Head of caudate nucleus (tissue), 42 donors: ENCODE measurements at regions of chr15 and their contacts with region 1.

Region 1: GRCh38 chr15:72155635-72156616 is 37.7 kb downstream of the SENP8 start:
- DNase-seq: peak; percentile 76 to 96 (median 92)

Region 2: DNA sequence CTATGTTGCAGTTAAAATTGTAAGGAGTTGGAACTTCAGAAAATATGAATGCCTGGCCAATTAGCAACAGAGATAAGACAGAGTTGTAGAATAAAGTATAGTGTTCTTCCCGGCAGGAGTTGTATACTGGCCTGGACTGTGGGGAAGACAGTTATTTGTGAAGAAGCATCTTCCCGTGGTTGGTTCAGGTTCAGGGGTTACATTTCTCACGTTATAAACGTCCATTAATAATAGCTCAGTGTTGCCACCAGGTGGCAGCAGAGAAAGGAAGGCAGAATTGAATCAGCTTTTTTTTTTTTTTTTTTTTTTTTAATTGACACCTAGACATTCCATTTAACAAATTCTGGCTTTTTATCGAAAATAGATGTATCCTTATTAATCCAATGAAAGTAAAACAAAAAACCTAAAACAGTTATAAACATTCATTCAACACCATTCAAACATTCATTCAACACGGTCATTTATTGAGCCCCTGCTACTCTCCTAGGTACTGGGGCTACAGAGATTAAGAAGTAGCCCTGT is 412.0 kb before region 1 on chr15:
- intact Hi-C with region 1: loop called (anchors 10 kb)
- DNase-seq: peak in 35 of 42 donors; percentile 9 to 85 (median 57)

Region 3: GRCh38 chr15:71780115-71780976 is 375.6 kb before region 1 on chr15:
- intact Hi-C with region 1: loop called (anchors 10 kb)
- DNase-seq: peak in 10 of 42 donors; percentile 11 to 55 (median 23)